ENCODE measurements at regions of chr10 and their contacts with region 1.

Region 1: DNA sequence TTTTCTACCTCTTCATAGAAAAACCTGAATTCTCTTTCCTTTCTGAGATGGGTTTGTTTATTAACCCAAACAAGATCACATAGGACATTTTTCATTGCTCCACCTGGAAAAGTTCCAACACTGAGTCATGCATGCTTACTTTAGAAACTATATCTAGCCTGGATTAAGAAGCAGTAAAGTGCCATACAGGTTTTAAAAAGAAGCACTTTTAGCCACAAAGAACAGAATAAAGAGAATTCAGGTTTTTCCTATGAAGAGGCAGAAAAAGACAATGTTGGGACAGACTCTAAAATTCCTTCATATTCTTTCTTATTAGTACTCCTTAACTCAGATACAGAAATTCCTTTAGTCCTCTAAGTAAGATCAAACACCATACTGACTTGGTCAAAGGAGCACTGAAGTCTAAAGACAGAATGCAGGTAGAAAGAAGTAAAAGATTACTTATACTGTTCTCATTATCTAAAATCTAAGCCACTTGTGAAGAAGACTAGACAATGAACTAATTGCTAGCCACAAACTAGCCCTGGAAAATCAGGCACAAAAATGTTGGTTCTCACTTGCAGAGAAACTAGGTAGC is 241.3 kb downstream of the ANK3 start:
- DNase-seq: no peak
- ATAC-seq: no peak
- H3K4me3 ChIP-seq: no peak overlapping the region
- H3K4me3 Mint-ChIP-seq: no peak overlapping the region
- H3K27ac ChIP-seq: no peak overlapping the region
- H3K27ac Mint-ChIP-seq: no peak overlapping the region
- H3K4me1 ChIP-seq: no peaks in the 10 kb centered on the region
- H3K4me1 Mint-ChIP-seq: no peaks in the 10 kb centered on the region
- H3K27me3 ChIP-seq: no peaks in the 10 kb centered on the region
- H3K27me3 Mint-ChIP-seq: no peaks in the 10 kb centered on the region
- CTCF ChIP-seq: no peak

Region 2: DNA sequence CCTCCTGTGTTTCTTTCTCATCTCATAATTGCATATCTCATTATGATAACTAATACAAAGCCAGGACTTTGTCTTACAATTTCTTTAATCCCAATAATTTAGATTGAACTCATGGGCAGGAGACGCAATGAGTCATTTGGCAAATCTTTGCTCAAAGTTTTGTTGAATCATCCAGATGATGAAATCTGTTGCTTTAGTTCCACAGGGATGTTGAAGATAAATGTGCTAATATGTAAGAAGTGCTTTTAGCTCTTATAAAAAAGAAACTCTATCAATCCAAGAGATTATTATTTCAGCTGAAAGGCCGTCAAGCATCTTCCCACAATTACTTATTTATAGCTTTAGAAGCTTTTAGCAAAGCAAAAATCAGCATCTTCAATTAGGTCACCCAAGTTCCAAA is 278.0 kb after region 1 on chr10:
- CTCF ChIA-PET with region 1: no interaction called
- POLR2A ChIA-PET with region 1: no interaction called
- intact Hi-C with region 1: loop called (anchors 1 kb)
- DNase-seq: no peak
- ATAC-seq: no peak
- H3K4me3 ChIP-seq: no peak overlapping the region
- H3K4me3 Mint-ChIP-seq: no peak overlapping the region
- H3K27ac ChIP-seq: no peak overlapping the region
- H3K27ac Mint-ChIP-seq: no peak overlapping the region
- H3K4me1 ChIP-seq: peaks cover 0 to 9% of the 10 kb centered on the region in 2 donors
- H3K4me1 Mint-ChIP-seq: peaks cover 6% of the 10 kb centered on the region
- H3K27me3 ChIP-seq: no peaks in the 10 kb centered on the region
- H3K27me3 Mint-ChIP-seq: no peaks in the 10 kb centered on the region
- CTCF ChIP-seq: no peak